HEK293 (cell line): ENCODE measurements at regions of chr4 and their contacts with region 1.

Region 1: GRCh38 chr4:82989575-82990429 is 20.8 kb downstream of the LIN54 start:
- H3K4me3 ChIP-seq: no peak overlapping the region
- H3K27ac ChIP-seq: no peak overlapping the region
- H3K4me1 ChIP-seq: no peaks in the 10 kb centered on the region
- CTCF ChIP-seq: no peak

Region 2: DNA sequence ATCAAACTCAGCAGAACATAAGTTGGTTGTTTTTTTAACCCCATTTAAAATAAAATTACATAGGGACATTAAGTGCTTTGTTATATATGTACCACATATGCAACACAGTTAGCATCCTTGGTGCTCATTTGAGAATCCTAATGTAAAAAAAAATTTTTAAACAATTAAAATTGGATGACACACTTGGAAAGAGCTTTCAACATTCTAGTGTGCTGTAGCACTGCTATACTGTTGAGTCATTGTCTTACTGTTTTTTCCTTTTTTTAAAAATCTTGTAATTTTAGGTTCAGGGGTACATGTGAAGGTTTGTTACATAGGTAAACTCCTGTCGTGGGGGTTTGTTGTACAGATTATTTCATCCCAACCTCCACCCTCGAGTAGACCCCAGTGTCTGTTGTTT is 76.5 kb before region 1 on chr4:
- CTCF ChIA-PET with region 1: interaction called, 10 read pairs
- POLR2A ChIA-PET with region 1: no interaction called
- H3K4me3 ChIP-seq: no peak overlapping the region
- H3K27ac ChIP-seq: no peak overlapping the region
- H3K4me1 ChIP-seq: no peaks in the 10 kb centered on the region
- CTCF ChIP-seq: no peak